B cell (primary cell): ENCODE measurements at regions of chr10 and their contacts with region 1.

Region 1: GRCh38 chr10:110918643-110919363 is at the start of gene BBIP1:
- DNase-seq: peak; percentile 99
- ATAC-seq: peak; percentile 85
- H3K4me3 ChIP-seq: peak within 1 kb of the TSS; percentile 78 to 100 (median 97)
- H3K4me3 Mint-ChIP-seq: peak within 1 kb of the TSS; percentile 98
- H3K27ac ChIP-seq: peak within 1 kb of the TSS; percentile 95 to 99
- H3K27ac Mint-ChIP-seq: peak within 1 kb of the TSS; percentile 100
- H3K4me1 ChIP-seq: peaks cover 16 to 33% of the 10 kb centered on the region in 2 donors
- H3K4me1 Mint-ChIP-seq: peaks cover 49% of the 10 kb centered on the region
- H3K27me3 ChIP-seq: no peaks in the 10 kb centered on the region
- H3K27me3 Mint-ChIP-seq: no peaks in the 10 kb centered on the region
- CTCF ChIP-seq: no peak
- total RNA-seq, gene BBIP1: 35.1 and 46.1 TPM in 2 replicates

Region 2: GRCh38 chr10:110497438-110498086 is 421.2 kb before region 1 on chr10 and contains the start of gene DUSP5:
- CTCF ChIA-PET with region 1: no interaction called
- POLR2A ChIA-PET with region 1: no interaction called
- intact Hi-C with region 1: loop called (anchors 2 kb)
- DNase-seq: peak; percentile 99
- ATAC-seq: peak; percentile 91
- H3K4me3 ChIP-seq: peak within 1 kb of the TSS in 4 of 5 experiments; percentile 57 to 71 (median 62)
- H3K4me3 Mint-ChIP-seq: peak within 1 kb of the TSS; percentile 93
- H3K27ac ChIP-seq: peak within 1 kb of the TSS; percentile 65 to 80
- H3K27ac Mint-ChIP-seq: peak within 1 kb of the TSS; percentile 93
- H3K4me1 ChIP-seq: peaks cover 35 to 51% of the 10 kb centered on the region in 2 donors
- H3K4me1 Mint-ChIP-seq: peaks cover 56% of the 10 kb centered on the region
- H3K27me3 ChIP-seq: peaks cover 0 to 14% (median 2%) of the 10 kb centered on the region in 4 experiments
- H3K27me3 Mint-ChIP-seq: peaks cover 6% of the 10 kb centered on the region
- CTCF ChIP-seq: no peak
- total RNA-seq, gene DUSP5: 10.0 and 10.8 TPM in 2 replicates

Region 3: DNA sequence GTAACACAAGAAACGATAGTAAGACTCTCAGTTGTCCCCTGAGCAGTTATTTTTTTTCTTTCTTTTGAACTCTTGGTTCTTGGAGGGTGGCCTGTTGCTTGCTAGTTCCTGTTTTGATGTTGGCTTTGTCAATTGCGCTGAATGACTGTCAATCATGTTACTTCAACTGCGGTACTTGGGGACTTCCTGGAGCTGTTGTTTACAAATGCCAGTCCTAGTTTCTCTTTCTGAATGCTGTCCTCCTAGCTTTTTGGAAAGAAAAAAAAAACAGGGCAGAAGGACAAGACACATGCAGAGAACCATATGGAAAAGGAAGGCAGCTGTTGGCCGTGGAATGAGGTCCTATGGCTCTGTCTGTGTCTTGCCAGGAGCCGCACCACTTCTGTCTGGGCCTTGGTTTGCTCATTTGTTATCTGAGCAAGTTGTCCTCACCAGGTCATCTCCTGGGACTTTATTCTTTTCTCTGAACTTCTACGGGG is 54.1 kb before region 1 on chr10:
- CTCF ChIA-PET with region 1: interaction called, 3 read pairs
- POLR2A ChIA-PET with region 1: interaction called, 7 read pairs
- intact Hi-C with region 1: loop called (anchors 1 kb)
- DNase-seq: peak; percentile 89
- ATAC-seq: peak; percentile 55
- H3K4me3 ChIP-seq: peak overlapping the region in 4 of 5 experiments; percentile 21 to 60 (median 38)
- H3K4me3 Mint-ChIP-seq: peak overlapping the region; percentile 85
- H3K27ac ChIP-seq: peak overlapping the region; percentile 94 to 96
- H3K27ac Mint-ChIP-seq: peak overlapping the region; percentile 97
- H3K4me1 ChIP-seq: peaks cover 97 to 100% of the 10 kb centered on the region in 2 donors
- H3K4me1 Mint-ChIP-seq: peaks cover 97% of the 10 kb centered on the region
- H3K27me3 ChIP-seq: no peaks in the 10 kb centered on the region
- H3K27me3 Mint-ChIP-seq: no peaks in the 10 kb centered on the region
- CTCF ChIP-seq: no peak

Region 4: DNA sequence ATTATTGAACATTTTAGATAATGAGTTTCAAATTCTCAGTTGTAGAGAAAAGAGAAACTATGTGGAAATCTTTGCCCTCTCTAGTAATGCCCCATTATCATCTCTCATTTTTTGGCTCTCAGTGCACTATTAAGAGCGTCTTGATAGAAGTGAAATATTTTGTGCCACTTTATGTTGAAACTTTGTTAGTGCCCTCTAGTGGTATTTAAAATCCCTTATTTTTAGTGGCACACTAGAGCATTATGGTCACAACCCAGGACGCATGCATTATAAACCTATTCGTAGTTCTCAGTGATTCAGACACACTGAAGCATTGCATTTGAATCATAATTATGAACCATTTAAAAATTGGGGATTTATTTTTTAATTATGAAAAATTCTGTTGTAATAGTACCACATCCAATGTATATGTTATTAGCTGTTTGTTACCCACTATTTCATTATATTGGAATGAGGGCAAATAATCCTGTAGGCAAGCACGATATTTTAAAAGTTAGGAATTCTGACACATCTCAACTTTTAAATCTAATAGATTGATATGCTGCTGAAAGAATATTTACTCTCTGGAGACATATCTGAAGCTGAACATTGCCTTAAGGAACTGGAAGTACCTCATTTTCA is 25.1 kb before region 1 on chr10:
- CTCF ChIA-PET with region 1: interaction called, 26 read pairs
- POLR2A ChIA-PET with region 1: interaction called, 5 read pairs
- intact Hi-C with region 1: no loop called
- DNase-seq: peak; percentile 74
- ATAC-seq: peak; percentile 79
- H3K4me3 ChIP-seq: no peak overlapping the region
- H3K4me3 Mint-ChIP-seq: no peak overlapping the region
- H3K27ac ChIP-seq: peak overlapping the region in 1 of 2 donors; percentile 21
- H3K27ac Mint-ChIP-seq: no peak overlapping the region
- H3K4me1 ChIP-seq: peaks cover 0 to 7% of the 10 kb centered on the region in 2 donors
- H3K4me1 Mint-ChIP-seq: peaks cover 24% of the 10 kb centered on the region
- H3K27me3 ChIP-seq: no peaks in the 10 kb centered on the region
- H3K27me3 Mint-ChIP-seq: no peaks in the 10 kb centered on the region
- CTCF ChIP-seq: peak; percentile 79

Region 5: GRCh38 chr10:110989016-110989415 is 70.2 kb after region 1 on chr10:
- CTCF ChIA-PET with region 1: no interaction called
- POLR2A ChIA-PET with region 1: no interaction called
- intact Hi-C with region 1: loop called (anchors 5 kb)
- DNase-seq: no peak
- ATAC-seq: no peak
- H3K4me3 ChIP-seq: no peak overlapping the region
- H3K4me3 Mint-ChIP-seq: no peak overlapping the region
- H3K27ac ChIP-seq: no peak overlapping the region
- H3K27ac Mint-ChIP-seq: no peak overlapping the region
- H3K4me1 ChIP-seq: peaks cover 0 to 11% of the 10 kb centered on the region in 2 donors
- H3K4me1 Mint-ChIP-seq: peaks cover 42% of the 10 kb centered on the region
- H3K27me3 ChIP-seq: no peaks in the 10 kb centered on the region
- H3K27me3 Mint-ChIP-seq: no peaks in the 10 kb centered on the region
- CTCF ChIP-seq: no peak

Region 6: GRCh38 chr10:111093741-111094380 is 175.1 kb after region 1 on chr10:
- CTCF ChIA-PET with region 1: no interaction called
- POLR2A ChIA-PET with region 1: no interaction called
- intact Hi-C with region 1: no loop called
- DNase-seq: no peak
- ATAC-seq: no peak
- H3K4me3 ChIP-seq: no peak overlapping the region
- H3K4me3 Mint-ChIP-seq: no peak overlapping the region
- H3K27ac ChIP-seq: no peak overlapping the region
- H3K27ac Mint-ChIP-seq: no peak overlapping the region
- H3K4me1 ChIP-seq: no peaks in the 10 kb centered on the region
- H3K4me1 Mint-ChIP-seq: no peaks in the 10 kb centered on the region
- H3K27me3 ChIP-seq: peaks cover 0 to 16% (median 0%) of the 10 kb centered on the region in 4 experiments
- H3K27me3 Mint-ChIP-seq: peaks cover 45% of the 10 kb centered on the region
- CTCF ChIP-seq: no peak